Activated B cell treated with CpG ODN at 0.5 μM for 24 hours (primary cell): ENCODE measurements at regions of chr1 and their contacts with region 1.

Region 1: GRCh38 chr1:111441573-111442192 is 7.4 kb downstream of the WDR77 start:
- DNase-seq: peak; percentile 40
- ATAC-seq: peak; percentile 91
- H3K4me3 Mint-ChIP-seq: no peak overlapping the region
- H3K27ac Mint-ChIP-seq: no peak overlapping the region
- H3K4me1 Mint-ChIP-seq: peaks cover 19% of the 10 kb centered on the region
- H3K27me3 Mint-ChIP-seq: no peaks in the 10 kb centered on the region
- CTCF ChIP-seq: no peak

Region 2: DNA sequence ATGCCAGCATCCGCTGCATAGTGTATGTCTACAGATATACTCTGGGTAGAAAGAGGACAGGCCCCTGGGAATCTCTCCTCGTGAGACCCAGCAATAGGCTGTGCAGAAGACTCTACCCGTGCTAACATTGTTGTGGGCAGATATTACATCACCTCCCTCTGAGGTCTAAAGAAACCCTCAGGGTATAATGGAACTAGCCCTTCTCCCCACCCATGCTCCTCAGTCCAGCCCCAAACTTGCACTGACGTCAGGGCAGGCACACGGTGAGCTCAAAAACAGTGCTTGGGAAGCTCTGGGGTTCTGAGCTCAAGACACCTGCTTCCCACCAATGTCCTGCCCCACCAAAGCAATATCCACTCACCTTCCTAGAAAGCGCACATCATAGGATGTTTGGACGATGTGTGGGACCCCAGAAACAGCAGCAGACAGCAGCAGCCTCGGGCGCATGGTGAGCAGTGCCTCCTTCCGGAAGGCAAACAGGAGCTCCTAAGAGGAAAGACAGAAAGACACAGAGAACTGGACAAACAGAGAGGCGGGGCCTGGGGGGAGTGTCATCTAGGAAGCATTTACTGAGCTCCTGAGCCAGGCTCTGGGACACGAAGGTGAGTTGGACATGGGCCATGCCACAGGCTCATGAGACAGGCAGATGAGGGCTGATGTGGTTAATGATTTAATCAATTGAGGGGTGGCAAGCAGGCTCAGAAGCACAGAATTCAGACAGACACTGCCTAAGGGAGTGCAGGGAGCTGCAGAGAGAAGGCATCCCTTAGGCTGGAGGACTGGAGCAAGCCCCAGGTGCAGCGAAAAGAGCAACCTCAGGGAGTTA is 18.9 kb before region 1 on chr1:
- CTCF ChIA-PET with region 1: no interaction called
- POLR2A ChIA-PET with region 1: no interaction called
- intact Hi-C with region 1: no loop called
- DNase-seq: no peak
- ATAC-seq: no peak
- H3K4me3 Mint-ChIP-seq: no peak overlapping the region
- H3K27ac Mint-ChIP-seq: no peak overlapping the region
- H3K4me1 Mint-ChIP-seq: no peaks in the 10 kb centered on the region
- H3K27me3 Mint-ChIP-seq: peaks cover 2% of the 10 kb centered on the region
- CTCF ChIP-seq: no peak

Region 3: DNA sequence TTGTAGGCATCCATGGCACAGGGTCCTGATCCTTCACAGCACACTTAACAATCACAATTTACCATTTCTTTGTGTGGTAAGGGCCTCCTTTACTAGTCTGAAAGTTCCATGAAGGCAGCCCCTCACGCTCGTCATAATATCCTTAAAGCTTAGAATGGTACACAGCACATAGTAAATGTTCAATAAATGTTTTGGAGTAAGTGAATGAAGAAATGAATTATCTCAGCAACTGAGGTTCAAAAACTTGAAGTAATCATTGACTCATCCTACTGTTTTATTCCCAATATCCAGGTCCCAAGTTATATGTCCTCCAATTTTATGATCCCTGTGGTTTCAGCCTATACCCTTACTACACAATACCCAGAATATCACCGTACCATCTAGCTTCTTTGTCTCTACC is 29.8 kb after region 1 on chr1:
- CTCF ChIA-PET with region 1: no interaction called
- POLR2A ChIA-PET with region 1: no interaction called
- intact Hi-C with region 1: no loop called
- DNase-seq: no peak
- ATAC-seq: peak; percentile 22
- H3K4me3 Mint-ChIP-seq: no peak overlapping the region
- H3K27ac Mint-ChIP-seq: no peak overlapping the region
- H3K4me1 Mint-ChIP-seq: peaks cover 34% of the 10 kb centered on the region
- H3K27me3 Mint-ChIP-seq: no peaks in the 10 kb centered on the region
- CTCF ChIP-seq: no peak

Region 4: DNA sequence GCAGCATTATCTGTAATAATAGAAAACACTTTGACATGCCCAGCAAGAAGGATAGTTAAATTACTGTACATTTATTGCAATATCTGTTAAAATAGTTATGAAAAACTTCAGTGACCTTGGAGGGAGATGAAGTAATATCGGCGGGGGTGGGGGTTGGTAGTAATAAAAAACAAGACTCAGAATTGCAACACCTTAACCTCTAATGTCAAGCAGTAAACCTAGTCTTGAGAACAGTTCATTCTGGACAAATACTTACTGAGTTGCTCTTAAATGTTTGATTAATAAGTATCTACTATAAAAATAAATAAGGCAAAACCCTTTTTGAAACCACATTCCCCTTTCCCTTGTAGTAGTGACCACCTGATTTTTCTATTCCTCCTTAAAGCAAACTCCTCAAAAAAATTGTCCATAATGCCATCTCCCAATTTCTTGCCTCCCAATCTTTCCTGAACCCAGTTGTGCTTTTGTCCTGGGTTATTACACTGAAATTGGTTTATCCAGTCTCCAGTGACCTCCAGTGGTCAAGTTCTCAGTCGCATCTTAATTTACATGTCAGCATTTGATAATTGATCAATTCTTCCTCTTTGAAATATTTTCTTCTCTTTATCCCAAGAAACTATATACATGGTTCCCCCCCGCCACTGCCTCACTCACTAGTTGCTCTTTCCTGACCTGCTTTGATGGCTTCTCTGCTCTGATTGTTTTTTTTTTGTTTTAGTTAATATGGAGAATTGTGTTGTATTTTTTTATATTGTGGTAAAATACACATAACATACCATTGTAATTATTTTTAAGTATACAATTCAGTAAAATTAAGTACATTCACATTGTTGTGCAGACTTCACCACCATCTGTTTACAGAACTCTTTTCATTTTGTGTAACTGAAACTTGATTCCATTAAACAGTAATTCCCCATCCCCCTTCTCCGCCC is 214.7 kb after region 1 on chr1:
- CTCF ChIA-PET with region 1: no interaction called
- POLR2A ChIA-PET with region 1: no interaction called
- intact Hi-C with region 1: loop called (anchors 2 kb)
- DNase-seq: no peak
- ATAC-seq: no peak
- H3K4me3 Mint-ChIP-seq: no peak overlapping the region
- H3K27ac Mint-ChIP-seq: no peak overlapping the region
- H3K4me1 Mint-ChIP-seq: peaks cover 35% of the 10 kb centered on the region
- H3K27me3 Mint-ChIP-seq: no peaks in the 10 kb centered on the region
- CTCF ChIP-seq: peak; percentile 52

Region 5: GRCh38 chr1:111769517-111770146 is 327.9 kb after region 1 on chr1:
- CTCF ChIA-PET with region 1: interaction called, 4 read pairs
- POLR2A ChIA-PET with region 1: no interaction called
- intact Hi-C with region 1: loop called (anchors 1 kb)
- DNase-seq: no peak
- ATAC-seq: peak; percentile 58
- H3K4me3 Mint-ChIP-seq: no peak overlapping the region
- H3K27ac Mint-ChIP-seq: no peak overlapping the region
- H3K4me1 Mint-ChIP-seq: no peaks in the 10 kb centered on the region
- H3K27me3 Mint-ChIP-seq: no peaks in the 10 kb centered on the region
- CTCF ChIP-seq: no peak